ENCODE measurements at regions of chr11 and their contacts with region 1.

Region 1: GRCh38 chr11:121722431-121723245 is 269.9 kb upstream of the SORL1-AS1 start:
- DNase-seq: peak; percentile 42
- H3K4me3 ChIP-seq: peak overlapping the region; percentile 24
- H3K27ac ChIP-seq: peak overlapping the region; percentile 61 to 68
- H3K4me1 ChIP-seq: no peaks in the 10 kb centered on the region
- H3K27me3 ChIP-seq: no peaks in the 10 kb centered on the region
- CTCF ChIP-seq: peak in 1 of 4 experiments; percentile 27
- POLR2A ChIP-seq: no peak

Region 2: DNA sequence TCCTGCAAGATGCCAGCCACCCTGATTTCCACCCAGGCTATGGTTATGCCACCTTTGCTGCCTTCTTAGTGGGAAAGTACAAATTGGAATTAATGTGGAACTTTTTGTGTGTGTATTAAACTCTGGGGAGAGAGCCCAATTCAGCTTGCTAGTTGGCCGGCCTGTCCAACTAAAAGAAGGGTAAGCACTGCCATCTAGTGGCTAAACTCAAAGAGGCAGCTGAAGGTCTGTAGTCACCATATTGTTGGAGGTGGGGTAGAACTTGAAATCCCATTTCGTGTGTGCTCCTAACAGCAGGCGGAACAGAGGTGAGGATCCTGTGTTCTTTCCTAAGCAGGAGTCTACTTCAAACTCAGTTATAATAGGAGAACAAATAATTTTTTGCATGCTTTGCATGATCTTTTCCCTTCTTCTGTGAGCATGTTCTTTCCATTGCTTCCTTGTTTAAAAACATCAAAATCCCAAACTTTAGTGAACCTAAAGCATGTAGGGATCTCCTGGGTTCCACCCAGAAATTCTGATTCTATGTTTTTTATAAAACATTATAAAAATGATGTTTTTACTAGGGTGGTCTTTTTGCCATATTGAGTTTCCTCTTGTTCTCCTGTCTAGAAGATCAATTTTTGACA is 131.1 kb before region 1 on chr11:
- intact Hi-C with region 1: no loop called
- DNase-seq: peak; percentile 79
- H3K4me3 ChIP-seq: no peak overlapping the region
- H3K27ac ChIP-seq: no peak overlapping the region
- H3K4me1 ChIP-seq: peaks cover 5% of the 10 kb centered on the region
- H3K27me3 ChIP-seq: no peaks in the 10 kb centered on the region
- CTCF ChIP-seq: peak; percentile 81 to 92 (median 88)
- POLR2A ChIP-seq: no peak

Region 3: GRCh38 chr11:121671283-121672168 is 51.1 kb before region 1 on chr11:
- intact Hi-C with region 1: loop called (anchors 5 kb)
- DNase-seq: no peak
- H3K4me3 ChIP-seq: no peak overlapping the region
- H3K27ac ChIP-seq: peak overlapping the region; percentile 39 to 44
- H3K4me1 ChIP-seq: no peaks in the 10 kb centered on the region
- H3K27me3 ChIP-seq: no peaks in the 10 kb centered on the region
- CTCF ChIP-seq: no peak
- POLR2A ChIP-seq: no peak

Region 4: DNA sequence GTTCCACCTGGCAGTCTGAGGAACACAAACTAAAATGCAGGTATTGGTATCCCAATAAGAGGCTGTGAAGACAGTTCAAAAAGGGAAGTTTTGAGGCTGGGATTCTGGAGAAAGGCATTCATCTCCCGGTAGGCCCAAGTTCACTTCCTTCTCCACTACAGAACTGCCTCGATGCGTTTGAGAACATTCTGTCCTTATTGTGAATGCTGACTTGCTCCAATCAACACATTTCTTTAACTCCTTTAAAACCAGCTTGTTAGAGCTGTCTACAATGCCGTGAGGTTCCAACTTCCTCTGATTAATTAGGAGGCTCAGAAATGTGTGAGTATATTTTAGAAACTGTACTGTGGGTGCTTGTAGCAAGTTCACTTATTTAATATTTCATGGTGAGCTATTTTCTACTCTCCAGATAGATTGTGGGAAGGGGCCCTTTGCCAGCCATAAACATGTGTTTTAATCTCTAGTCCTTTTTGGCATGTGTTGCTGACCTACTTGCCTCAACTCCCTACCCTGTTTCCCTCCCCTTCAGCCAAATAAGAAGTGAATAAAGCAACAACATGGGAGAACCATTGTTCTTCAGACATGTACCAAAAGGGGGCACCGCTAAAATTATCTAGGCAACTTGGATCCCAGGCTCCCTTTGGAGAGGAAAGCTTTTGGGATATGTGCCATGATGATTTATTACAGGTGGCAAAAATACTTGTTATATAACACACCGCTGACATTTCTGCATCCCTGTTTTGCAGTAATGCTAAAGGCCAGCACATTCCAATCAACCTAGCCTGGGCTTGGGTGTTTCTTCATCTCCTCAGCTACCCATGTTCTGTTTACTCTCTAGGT is 147.8 kb after region 1 on chr11:
- intact Hi-C with region 1: no loop called
- DNase-seq: no peak
- H3K4me3 ChIP-seq: no peak overlapping the region
- H3K27ac ChIP-seq: peak overlapping the region; percentile 11 to 32
- H3K4me1 ChIP-seq: no peaks in the 10 kb centered on the region
- H3K27me3 ChIP-seq: no peaks in the 10 kb centered on the region
- CTCF ChIP-seq: no peak
- POLR2A ChIP-seq: no peak